Aorta (tissue), 5 donors: ENCODE measurements at regions of chr22 and their contacts with region 1.

Region 1: DNA sequence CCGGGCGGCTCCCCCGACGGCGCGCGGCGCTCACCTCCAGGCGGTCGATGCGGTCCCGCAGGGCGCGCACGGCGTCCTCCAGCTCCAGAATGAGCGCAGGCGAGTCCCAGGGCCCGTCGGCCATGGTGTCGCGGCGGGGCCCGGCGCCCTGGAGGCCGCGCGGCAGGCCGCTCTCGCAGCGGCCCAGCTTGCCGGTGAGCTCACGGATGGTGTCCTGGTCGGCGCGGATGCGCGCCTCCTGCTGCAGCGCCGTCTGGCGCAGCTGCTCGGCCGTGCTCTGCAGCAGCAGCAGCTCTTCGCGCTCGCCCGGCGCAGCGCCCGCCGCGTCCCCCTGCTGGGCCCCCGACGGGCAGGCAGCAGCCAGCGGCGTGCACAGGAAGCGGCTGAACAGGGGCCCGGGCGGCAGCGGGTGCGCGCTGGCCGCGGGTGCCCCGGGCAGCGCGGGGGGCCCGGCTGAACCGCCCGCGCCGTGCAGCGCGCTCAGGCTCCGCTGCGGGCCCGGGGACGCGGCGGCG is 570 bp downstream of the NPTXR start:
- DNase-seq: peak in 1 of 2 donors; percentile 67
- ATAC-seq: peak; percentile 69
- H3K4me3 ChIP-seq: peak overlapping the region; percentile 39 to 55
- H3K27ac ChIP-seq: peak overlapping the region; percentile 29 to 63
- H3K4me1 ChIP-seq: no peaks in the 10 kb centered on the region
- H3K27me3 ChIP-seq: no peaks in the 10 kb centered on the region

Region 2: GRCh38 chr22:38766076-38766777 is 77.0 kb before region 1 on chr22:
- intact Hi-C with region 1: loop called (anchors 5 kb)
- DNase-seq: no peak
- ATAC-seq: no peak
- H3K4me3 ChIP-seq: no peak overlapping the region
- H3K27ac ChIP-seq: no peak overlapping the region
- H3K4me1 ChIP-seq: no peaks in the 10 kb centered on the region
- H3K27me3 ChIP-seq: no peaks in the 10 kb centered on the region

Region 3: DNA sequence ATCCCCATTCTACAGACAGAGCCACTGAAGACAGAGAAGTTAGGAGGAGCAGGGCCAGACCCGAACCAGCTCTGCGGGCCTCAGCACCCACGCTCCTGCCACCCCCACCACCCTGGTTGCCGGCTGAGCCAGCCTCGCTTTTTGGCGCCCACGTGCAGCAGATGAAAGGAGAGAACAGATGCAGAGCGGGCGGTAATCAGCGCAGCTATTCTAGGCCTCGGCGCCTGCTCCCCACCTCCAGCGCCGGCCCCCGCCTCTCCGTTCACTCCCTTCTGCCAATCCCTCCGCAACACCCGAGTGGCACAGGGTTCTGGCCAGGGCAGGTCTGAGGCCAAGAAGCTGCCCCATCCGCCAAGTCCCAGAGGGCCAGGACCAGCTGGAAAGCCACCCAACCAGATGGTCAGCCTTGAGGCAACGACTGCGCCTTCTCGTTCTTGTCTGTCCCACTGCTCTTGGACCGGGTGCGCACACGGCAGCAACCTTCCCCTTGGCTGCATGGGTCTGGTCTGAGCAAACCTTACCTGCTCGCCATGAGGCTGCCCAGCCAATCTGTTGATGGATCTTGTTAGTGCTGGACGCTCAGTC is 66.1 kb before region 1 on chr22:
- intact Hi-C with region 1: loop called (anchors 5 kb)
- DNase-seq: no peak
- ATAC-seq: no peak
- H3K4me3 ChIP-seq: no peak overlapping the region
- H3K27ac ChIP-seq: no peak overlapping the region
- H3K4me1 ChIP-seq: no peaks in the 10 kb centered on the region
- H3K27me3 ChIP-seq: no peaks in the 10 kb centered on the region

Region 4: DNA sequence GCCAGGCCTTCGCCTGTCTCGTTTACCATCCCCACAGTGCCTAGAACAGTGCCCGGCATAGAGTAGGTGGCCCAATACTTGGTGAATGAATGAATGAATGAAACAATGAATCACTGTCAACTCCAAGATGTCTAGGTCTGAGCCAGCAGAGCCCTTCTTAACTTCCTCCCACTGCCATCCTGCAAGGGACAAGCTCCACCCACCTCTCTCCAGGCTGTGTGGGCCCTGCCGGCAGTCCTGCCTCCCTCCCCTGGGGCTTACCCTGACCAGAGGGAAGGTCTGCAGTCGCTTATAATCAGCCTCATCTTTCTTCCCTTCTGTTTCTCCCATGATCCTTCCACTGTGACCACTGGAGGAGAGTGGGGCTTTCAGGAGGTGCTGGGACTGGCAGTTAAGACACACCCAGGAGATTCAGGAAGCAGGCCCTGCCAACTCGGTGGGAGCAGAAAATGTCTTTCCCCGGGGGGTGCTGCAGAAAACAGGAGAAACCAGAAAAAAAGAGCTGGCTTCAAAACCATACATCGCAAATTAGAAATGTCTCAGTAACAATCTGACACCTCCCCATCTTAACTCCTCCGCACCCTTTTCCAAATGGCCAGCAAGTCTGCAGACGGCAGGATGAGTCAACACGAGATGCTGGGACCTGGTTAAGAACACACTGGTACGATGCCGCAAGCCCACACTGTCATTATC is 60.7 kb before region 1 on chr22:
- intact Hi-C with region 1: loop called in 1 of 2 experiments (anchors 5 kb)
- DNase-seq: no peak
- ATAC-seq: no peak
- H3K4me3 ChIP-seq: no peak overlapping the region
- H3K27ac ChIP-seq: no peak overlapping the region
- H3K4me1 ChIP-seq: peaks cover 0 to 5% of the 10 kb centered on the region in 2 donors
- H3K27me3 ChIP-seq: no peaks in the 10 kb centered on the region

Region 5: GRCh38 chr22:38793721-38794466 is 49.4 kb before region 1 on chr22 and contains the start of gene DNAL4:
- intact Hi-C with region 1: loop called in 1 of 2 experiments (anchors 5 kb)
- DNase-seq: peak; percentile 95 to 98
- ATAC-seq: peak; percentile 96
- H3K4me3 ChIP-seq: peak within 1 kb of the TSS; percentile 92 to 97
- H3K27ac ChIP-seq: peak within 1 kb of the TSS in 1 of 2 donors; percentile 37
- H3K4me1 ChIP-seq: peaks cover 0 to 2% of the 10 kb centered on the region in 2 donors
- H3K27me3 ChIP-seq: no peaks in the 10 kb centered on the region
- total RNA-seq, gene DNAL4: 8.2 to 10.8 TPM

Region 6: DNA sequence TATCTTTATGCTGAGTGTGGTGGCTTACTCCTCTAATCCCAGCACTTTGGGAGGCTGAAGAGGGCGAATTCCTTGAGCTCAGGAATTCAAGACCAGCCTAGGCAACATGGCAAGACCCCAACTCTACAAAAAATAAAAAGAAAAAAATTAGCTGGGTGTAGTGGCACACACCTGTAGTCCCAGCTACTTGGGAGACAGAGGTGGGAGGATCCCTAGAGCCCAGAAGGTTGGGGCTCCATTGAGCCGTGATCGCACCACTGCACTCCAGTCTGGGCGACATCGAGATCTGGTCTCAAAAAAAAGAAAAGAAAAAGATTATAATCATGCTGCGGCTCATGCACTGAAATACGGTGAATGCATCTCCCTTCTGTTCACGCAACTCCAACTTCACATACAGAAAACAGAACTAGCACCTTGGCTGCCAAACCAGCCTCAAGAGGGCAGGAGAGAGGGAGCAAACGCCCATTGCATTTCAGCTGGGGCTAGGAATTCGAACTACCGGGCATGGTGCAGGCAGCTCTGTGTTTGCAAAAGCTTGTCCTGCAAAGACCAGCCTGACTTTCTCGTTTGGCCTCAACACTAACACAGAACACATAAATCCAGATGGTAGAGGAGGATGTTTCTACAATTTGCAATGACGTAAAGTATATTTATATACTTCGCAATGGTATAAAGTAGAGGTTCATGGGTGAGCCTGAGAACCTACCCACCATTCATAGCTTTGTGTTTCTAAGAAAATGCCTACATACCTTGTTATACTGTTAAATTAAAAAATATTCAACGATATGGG is 500.2 kb after region 1 on chr22:
- intact Hi-C with region 1: no loop called
- DNase-seq: peak; percentile 68 to 77
- ATAC-seq: no peak
- H3K4me3 ChIP-seq: no peak overlapping the region
- H3K27ac ChIP-seq: no peak overlapping the region
- H3K4me1 ChIP-seq: no peaks in the 10 kb centered on the region
- H3K27me3 ChIP-seq: no peaks in the 10 kb centered on the region